ENCODE measurements at regions of chr19 and their contacts with region 1.

Region 1: DNA sequence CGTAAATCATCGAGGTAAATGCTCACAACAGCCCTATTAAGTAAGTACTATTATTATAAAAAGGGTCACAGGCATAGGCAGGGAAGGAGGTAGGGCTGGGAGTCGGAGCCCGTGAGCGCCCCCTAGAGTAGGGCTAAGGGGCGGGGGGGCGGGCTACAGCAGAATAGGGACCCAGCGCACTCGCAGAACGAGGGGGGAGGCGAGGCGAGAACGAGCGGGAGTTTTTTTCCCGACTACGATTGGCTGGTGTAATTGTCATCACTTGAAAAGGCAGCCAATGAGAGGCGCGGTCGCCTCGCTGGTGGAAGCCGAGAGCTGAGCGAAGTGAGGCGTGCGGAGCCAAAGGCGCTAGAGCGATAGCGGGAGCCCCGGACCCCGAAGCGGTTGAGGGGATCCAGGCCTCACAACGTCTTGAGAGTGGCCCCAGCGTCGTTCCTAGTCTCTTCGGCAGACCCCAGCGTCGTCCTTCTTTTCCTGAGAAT is 24.2 kb downstream of the KEAP1 start:
- H3K4me3 ChIP-seq: no peak overlapping the region
- H3K27ac ChIP-seq: no peak overlapping the region
- H3K4me1 ChIP-seq: no peaks in the 10 kb centered on the region
- CTCF ChIP-seq: no peak

Region 2: DNA sequence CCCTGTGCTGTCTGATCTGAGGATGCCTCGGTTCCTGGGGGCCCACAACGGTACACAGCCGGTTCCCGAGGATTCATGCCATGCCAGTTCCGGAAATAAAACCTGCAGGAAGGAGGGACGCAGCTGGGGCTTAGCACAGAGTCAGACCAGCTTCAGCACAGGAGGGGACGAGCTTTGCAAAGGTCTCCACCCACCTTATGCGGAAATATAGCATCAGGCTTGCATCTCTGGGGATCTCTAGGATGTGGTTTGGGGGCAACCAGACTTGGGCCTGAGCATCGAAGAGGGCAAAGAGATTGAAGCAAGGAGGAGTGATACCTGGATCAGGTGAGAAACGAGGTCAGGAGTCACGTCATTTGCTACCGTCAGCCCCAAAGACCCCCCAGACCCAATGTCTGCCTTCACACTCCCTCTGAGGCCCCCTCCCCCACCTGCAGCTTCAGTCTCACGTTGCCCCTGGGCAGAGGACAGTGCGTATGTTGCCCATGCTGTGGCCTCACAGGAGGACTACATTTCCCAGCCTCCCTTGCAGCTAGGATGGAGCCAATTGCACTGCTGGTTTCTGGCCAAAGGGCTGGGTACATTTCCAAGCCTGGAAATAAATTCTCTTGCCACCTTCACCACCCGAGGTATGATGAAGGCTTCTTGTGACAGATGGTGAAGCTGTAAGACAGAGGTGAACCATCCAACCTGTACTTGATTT is 110.7 kb before region 1 on chr19:
- CTCF ChIA-PET with region 1: no interaction called
- POLR2A ChIA-PET with region 1: no interaction called
- H3K4me3 ChIP-seq: no peak overlapping the region
- H3K27ac ChIP-seq: no peak overlapping the region
- H3K4me1 ChIP-seq: no peaks in the 10 kb centered on the region
- CTCF ChIP-seq: no peak

Region 3: DNA sequence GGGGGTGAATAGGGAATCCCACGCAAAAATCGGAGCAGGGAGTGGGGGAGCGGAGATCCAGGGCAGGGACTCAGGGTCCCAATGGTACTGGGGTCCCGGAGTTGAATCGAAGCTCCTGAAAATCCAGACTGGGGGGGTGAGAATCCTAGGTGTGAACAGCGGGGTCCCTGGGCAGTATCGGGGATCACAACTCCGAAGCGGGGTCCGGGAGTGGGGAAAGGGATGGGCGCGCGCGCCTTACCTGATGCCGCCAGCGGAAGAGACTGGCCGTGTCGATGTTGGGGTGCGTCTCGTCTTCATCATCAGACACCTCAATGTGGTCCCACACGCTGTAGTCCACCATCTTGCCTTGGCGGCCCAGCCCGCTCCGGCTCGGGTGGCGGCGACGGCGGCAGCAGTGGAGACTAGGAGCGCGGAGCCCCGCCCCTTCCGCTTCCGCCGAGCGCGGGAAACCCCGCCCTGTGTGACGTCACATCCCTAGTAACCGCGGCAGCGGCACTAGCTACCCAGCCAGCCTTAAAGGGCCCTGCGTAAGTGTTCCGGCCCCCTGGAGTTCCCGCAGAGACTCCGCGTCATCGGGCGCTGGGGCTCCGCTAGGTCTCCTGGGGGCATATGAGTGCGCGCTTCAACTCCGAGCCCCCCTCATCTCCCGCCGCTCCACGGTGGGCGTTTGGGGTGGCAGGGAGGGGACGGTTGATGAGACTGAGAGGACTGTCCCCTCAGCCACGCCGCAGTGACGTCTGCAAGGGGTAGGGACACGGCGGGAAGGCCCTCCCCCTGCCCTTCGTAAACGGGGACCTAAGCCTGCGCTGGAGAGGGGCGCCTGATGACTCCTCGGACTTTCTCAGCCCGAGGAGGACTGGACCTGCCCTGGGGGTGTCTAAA is 75.6 kb before region 1 on chr19 and contains the start of gene CDC37:
- CTCF ChIA-PET with region 1: interaction called, 11 read pairs
- POLR2A ChIA-PET with region 1: interaction called, 3 read pairs
- H3K4me3 ChIP-seq: peak within 1 kb of the TSS; percentile 99
- H3K27ac ChIP-seq: peak within 1 kb of the TSS; percentile 73
- H3K4me1 ChIP-seq: peaks cover 8% of the 10 kb centered on the region
- CTCF ChIP-seq: no peak

Region 4: GRCh38 chr19:10491472-10492047 is 12.6 kb after region 1 on chr19:
- CTCF ChIA-PET with region 1: interaction called, 21 read pairs
- POLR2A ChIA-PET with region 1: no interaction called
- H3K4me3 ChIP-seq: no peak overlapping the region
- H3K27ac ChIP-seq: no peak overlapping the region
- H3K4me1 ChIP-seq: no peaks in the 10 kb centered on the region
- CTCF ChIP-seq: no peak

Region 5: GRCh38 chr19:10543420-10544241 is 64.7 kb after region 1 on chr19 and contains the start of gene ATG4D:
- CTCF ChIA-PET with region 1: interaction called, 10 read pairs
- POLR2A ChIA-PET with region 1: no interaction called
- H3K4me3 ChIP-seq: peak within 1 kb of the TSS; percentile 89
- H3K27ac ChIP-seq: peak within 1 kb of the TSS; percentile 94
- H3K4me1 ChIP-seq: no peaks in the 10 kb centered on the region
- CTCF ChIP-seq: no peak

Region 6: DNA sequence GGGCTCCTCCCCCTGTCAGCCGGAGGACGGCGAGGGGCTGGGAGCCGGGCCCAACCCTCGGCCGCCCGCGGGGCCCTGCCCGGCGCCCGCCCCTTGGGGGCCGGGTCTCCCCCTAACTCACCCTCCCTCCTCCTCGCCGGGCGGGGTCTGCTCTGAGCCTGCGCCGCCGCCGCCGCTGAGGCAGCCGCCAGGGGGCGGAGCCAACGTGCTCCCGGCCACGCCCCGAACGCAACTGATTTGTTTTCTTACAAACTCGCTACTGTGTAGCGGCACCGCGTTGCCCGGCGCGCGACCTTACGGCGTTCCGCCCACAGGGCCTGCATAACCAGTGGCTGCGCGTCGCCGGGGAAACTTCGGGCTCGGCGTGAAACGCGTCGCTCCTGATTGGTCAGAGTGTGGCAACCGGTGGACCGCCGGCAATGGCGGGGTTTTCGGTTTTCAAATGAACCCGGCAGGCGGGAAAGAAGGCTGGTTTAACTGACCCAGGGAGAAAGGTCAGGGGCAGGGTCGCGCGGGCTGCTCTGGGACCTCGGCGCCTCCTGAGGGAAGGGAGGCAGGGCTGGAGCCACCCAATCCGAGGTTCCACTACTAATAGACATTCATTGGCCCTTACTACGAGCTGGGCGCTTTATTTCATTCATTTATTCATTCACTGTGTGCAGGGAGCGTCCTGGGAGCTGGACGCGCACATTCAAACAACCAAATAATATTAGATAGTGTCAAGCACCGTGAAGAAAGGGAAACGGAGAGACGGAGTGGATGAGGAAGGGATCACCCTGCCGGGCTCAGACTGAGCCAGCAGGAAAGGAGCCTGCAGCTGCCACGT is 90.1 kb after region 1 on chr19 and contains the start of gene CDKN2D:
- CTCF ChIA-PET with region 1: interaction called, 10 read pairs
- POLR2A ChIA-PET with region 1: interaction called, 3 read pairs
- H3K4me3 ChIP-seq: peak within 1 kb of the TSS; percentile 44
- H3K27ac ChIP-seq: peak within 1 kb of the TSS; percentile 75
- H3K4me1 ChIP-seq: peaks cover 13% of the 10 kb centered on the region
- CTCF ChIP-seq: no peak; the same call in 1 of the 2 replicates

Region 7: GRCh38 chr19:10602000-10602329 is 123.0 kb after region 1 on chr19:
- CTCF ChIA-PET with region 1: no interaction called
- POLR2A ChIA-PET with region 1: no interaction called
- H3K4me3 ChIP-seq: no peak overlapping the region
- H3K27ac ChIP-seq: no peak overlapping the region
- H3K4me1 ChIP-seq: no peaks in the 10 kb centered on the region
- CTCF ChIP-seq: no peak